Left ventricle myocardium superior (tissue), 1 donor: ENCODE measurements at regions of chr4 and their contacts with region 1.

Region 1: GRCh38 chr4:150751648-150752047 is 169.7 kb downstream of the MAB21L2 start:
- DNase-seq: no peak
- ATAC-seq: no peak

Region 2: GRCh38 chr4:150641612-150642011 is 110.0 kb before region 1 on chr4:
- intact Hi-C with region 1: no loop called
- DNase-seq: no peak
- ATAC-seq: no peak

Region 3: GRCh38 chr4:150694438-150694837 is 57.2 kb before region 1 on chr4:
- intact Hi-C with region 1: loop called (anchors 10 kb)
- DNase-seq: no peak
- ATAC-seq: no peak